Esophagus muscularis mucosa (tissue), 4 donors: ENCODE measurements at regions of chr1 and their contacts with region 1.

Region 1: DNA sequence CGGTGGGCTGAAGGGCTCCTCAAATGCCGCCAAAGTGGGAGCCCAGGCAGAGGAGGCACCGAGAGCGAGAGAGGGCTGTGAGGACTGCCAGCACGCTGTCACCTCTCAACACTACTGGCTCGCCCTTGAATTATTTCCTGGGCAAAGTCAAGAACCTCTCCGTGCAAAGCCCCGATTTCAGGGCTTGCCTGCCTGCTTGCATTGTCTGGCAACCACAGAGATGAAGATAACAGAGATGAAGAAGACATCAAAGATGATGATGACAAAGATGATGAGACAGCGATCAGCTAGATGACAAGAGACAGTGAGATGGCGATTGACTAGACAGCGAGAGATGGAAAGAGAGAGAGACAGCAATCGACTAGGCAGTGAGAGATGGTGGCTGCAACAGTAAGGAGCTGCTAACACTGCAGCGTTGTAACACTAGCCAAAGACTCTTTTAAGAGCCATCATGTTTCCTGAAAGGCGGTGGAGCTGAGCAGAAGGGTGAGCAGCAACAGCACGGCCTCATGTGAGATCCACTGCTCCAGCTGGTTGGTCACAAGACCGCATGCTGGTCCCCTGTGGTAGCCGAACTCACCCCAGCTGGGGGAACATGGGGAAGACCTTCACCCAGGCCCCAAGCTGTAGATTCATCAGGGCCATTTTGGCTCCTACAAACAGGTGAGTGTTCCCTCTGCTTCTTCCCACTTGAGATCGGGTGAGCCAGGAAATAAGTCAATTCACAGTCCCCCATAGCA is 976.7 kb downstream of the ADGRL2 start:
- DNase-seq: no peak
- H3K4me3 ChIP-seq: no peak overlapping the region
- H3K27ac ChIP-seq: no peak overlapping the region
- H3K4me1 ChIP-seq: no peaks in the 10 kb centered on the region
- H3K27me3 ChIP-seq: no peaks in the 10 kb centered on the region
- CTCF ChIP-seq: no peak
- EP300 ChIP-seq: no peak
- POLR2A ChIP-seq: no peak

Region 2: GRCh38 chr1:82810601-82811000 is 33.2 kb after region 1 on chr1:
- intact Hi-C with region 1: loop called (anchors 2 kb)
- DNase-seq: no peak
- H3K4me3 ChIP-seq: no peak overlapping the region
- H3K27ac ChIP-seq: no peak overlapping the region
- H3K4me1 ChIP-seq: no peaks in the 10 kb centered on the region
- H3K27me3 ChIP-seq: no peaks in the 10 kb centered on the region
- CTCF ChIP-seq: no peak
- EP300 ChIP-seq: no peak
- POLR2A ChIP-seq: no peak